ENCODE measurements at regions of chr7 and their contacts with region 1.

Region 1: DNA sequence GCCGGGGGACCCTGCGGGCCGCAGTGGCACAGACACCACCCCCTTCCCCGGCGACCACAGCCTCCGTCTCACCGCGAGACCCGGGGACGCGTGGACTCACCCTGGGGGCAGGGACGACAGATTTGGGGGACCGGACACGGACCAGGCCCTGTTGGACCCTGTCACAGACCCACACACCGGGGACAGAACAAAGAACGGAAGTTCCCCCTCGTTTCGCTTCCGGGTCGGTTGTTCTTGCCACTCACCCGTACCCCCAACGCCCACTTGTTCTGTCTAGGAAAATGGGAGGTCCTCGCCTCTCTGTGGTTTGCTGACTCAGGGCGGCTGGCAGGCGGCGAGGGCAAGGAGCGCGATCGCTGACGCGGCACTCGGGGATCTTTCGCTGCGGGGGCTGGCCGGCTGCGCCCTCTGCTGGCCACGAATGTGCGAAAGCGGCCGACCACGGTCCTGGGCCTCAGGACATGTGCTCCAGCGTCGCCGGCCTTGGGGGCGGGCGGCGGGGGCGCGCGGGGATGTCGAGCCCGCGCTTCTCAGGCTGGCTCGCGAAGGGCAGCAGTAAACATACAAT is at the start of gene ZNF3:
- DNase-seq: peak; percentile 98 to 99
- ATAC-seq: peak; percentile 94 to 97 (median 96)
- H3K4me3 ChIP-seq: peak within 1 kb of the TSS; percentile 94
- H3K27ac ChIP-seq: peak within 1 kb of the TSS; percentile 92
- H3K4me1 ChIP-seq: peaks cover 15% of the 10 kb centered on the region
- H3K27me3 ChIP-seq: no peaks in the 10 kb centered on the region
- CTCF ChIP-seq: peak; percentile 93
- total RNA-seq, gene ZNF3: 14.6 to 23.8 (median 17.1) TPM

Region 2: GRCh38 chr7:99953649-99954048 is 128.0 kb before region 1 on chr7:
- intact Hi-C with region 1: no loop called
- DNase-seq: peak; percentile 67 to 77
- ATAC-seq: peak in 3 of 4 donors; percentile 58 to 80 (median 72)
- H3K4me3 ChIP-seq: no peak overlapping the region
- H3K27ac ChIP-seq: no peak overlapping the region
- H3K4me1 ChIP-seq: no peaks in the 10 kb centered on the region
- H3K27me3 ChIP-seq: peaks cover 0 to 11% (median 9%) of the 10 kb centered on the region in 3 donors
- CTCF ChIP-seq: no peak

Region 3: GRCh38 chr7:100019908-100020307 is 61.7 kb before region 1 on chr7:
- intact Hi-C with region 1: loop called in 1 of 2 experiments (anchors 2 kb)
- DNase-seq: no peak
- ATAC-seq: no peak
- H3K4me3 ChIP-seq: no peak overlapping the region
- H3K27ac ChIP-seq: no peak overlapping the region
- H3K4me1 ChIP-seq: peaks cover 23% of the 10 kb centered on the region
- H3K27me3 ChIP-seq: no peaks in the 10 kb centered on the region
- CTCF ChIP-seq: no peak

Region 4: GRCh38 chr7:100148559-100149350 is 67.1 kb after region 1 on chr7 and contains the start of gene LAMTOR4:
- intact Hi-C with region 1: no loop called
- DNase-seq: peak; percentile 98 to 99
- ATAC-seq: peak; percentile 98 to 99 (median 99)
- H3K4me3 ChIP-seq: peak within 1 kb of the TSS; percentile 73
- H3K27ac ChIP-seq: peak within 1 kb of the TSS; percentile 84
- H3K4me1 ChIP-seq: peaks cover 15% of the 10 kb centered on the region
- H3K27me3 ChIP-seq: no peaks in the 10 kb centered on the region
- CTCF ChIP-seq: peak; percentile 6
- total RNA-seq, gene LAMTOR4: 48.7 to 74.6 (median 68.1) TPM

Region 5: DNA sequence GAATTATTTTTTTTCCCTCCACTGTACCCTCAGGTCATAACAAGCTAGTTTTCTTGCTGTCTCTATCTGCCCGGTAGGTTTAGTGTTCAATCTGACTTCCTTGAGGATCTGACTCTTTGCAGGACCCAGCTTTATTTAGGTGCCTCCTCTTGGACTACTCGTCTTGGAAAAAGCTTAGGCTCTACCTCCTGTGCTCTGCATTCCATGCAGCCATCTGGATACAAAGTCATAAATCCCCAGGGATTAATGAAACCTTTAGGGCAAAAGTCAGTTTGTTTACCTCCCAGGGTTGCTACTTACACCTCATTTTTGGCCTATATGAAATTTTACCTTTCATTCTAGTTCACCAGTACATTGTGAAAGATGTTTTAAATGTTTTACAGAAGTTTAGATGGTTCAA is 104.1 kb after region 1 on chr7:
- intact Hi-C with region 1: no loop called
- DNase-seq: no peak
- ATAC-seq: no peak
- H3K4me3 ChIP-seq: no peak overlapping the region
- H3K27ac ChIP-seq: no peak overlapping the region
- H3K4me1 ChIP-seq: no peaks in the 10 kb centered on the region
- H3K27me3 ChIP-seq: peaks cover 0 to 11% (median 0%) of the 10 kb centered on the region in 3 donors
- CTCF ChIP-seq: no peak

Measured in psoas muscle (tissue), 8 donors.